ENCODE measurements at regions of chr5 and their contacts with region 1.

Region 1: DNA sequence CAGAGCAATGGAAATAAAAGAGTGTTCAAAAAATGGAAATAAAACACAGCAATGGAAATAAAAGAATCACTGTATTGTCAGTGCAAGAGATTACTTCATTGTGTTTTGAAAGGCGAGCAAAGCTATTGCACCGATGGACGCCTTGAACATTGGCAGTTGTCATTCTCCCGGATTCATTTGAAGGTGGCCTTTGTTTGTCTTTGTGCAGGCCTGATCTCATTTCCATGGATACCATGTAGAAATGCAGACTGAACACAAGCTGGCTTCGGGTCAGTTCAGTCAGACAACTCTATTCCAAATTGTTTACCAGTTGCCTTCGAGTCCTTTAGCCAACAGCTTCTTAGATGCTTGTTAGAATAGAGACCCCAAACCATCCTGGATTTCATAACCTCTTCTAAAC is 8.3 kb downstream of the ITGA2 start:
- DNase-seq: no peak
- H3K4me3 Mint-ChIP-seq: no peak overlapping the region
- H3K27ac Mint-ChIP-seq: no peak overlapping the region
- H3K4me1 Mint-ChIP-seq: peaks cover 11% of the 10 kb centered on the region
- H3K27me3 Mint-ChIP-seq: no peaks in the 10 kb centered on the region
- CTCF ChIP-seq: no peak

Region 2: GRCh38 chr5:52712354-52712753 is 285.1 kb before region 1 on chr5:
- CTCF ChIA-PET with region 1: no interaction called
- POLR2A ChIA-PET with region 1: no interaction called
- intact Hi-C with region 1: no loop called
- DNase-seq: no peak
- H3K4me3 Mint-ChIP-seq: no peak overlapping the region
- H3K27ac Mint-ChIP-seq: no peak overlapping the region
- H3K4me1 Mint-ChIP-seq: no peaks in the 10 kb centered on the region
- H3K27me3 Mint-ChIP-seq: no peaks in the 10 kb centered on the region
- CTCF ChIP-seq: no peak

Region 3: DNA sequence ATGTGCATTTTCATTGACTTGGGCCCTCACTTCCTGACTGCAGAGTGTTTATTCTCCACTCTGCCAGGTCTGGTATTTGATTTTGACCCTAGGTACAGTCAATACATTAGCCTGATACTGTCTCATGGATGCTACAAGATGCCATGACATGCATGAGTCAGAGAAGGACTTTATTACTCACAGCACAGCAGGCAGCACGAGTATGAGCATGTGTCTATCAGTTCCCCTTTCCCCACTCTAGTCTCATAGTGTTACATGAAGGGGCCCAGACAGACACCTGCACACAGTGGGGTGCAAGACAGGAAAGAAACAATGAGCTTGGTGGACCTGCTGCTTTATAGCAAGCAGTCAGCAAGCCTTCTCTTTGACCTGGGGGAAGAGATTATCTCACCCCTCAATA is 11.3 kb after region 1 on chr5:
- CTCF ChIA-PET with region 1: no interaction called
- POLR2A ChIA-PET with region 1: interaction called, 32 read pairs
- intact Hi-C with region 1: no loop called
- DNase-seq: peak; percentile 76
- H3K4me3 Mint-ChIP-seq: no peak overlapping the region
- H3K27ac Mint-ChIP-seq: no peak overlapping the region
- H3K4me1 Mint-ChIP-seq: peaks cover 22% of the 10 kb centered on the region
- H3K27me3 Mint-ChIP-seq: no peaks in the 10 kb centered on the region
- CTCF ChIP-seq: no peak

Measured in MCF 10A (cell line).